PC-9 (cell line): ENCODE measurements at regions of chr5 and their contacts with region 1.

Region 1: GRCh38 chr5:1093361-1093760 is 18.5 kb downstream of the SLC12A7 start:
- DNase-seq: no peak
- H3K4me3 ChIP-seq: no peak overlapping the region
- H3K27ac ChIP-seq: no peak overlapping the region
- H3K4me1 ChIP-seq: no peaks in the 10 kb centered on the region
- H3K27me3 ChIP-seq: no peaks in the 10 kb centered on the region
- CTCF ChIP-seq: no peak

Region 2: DNA sequence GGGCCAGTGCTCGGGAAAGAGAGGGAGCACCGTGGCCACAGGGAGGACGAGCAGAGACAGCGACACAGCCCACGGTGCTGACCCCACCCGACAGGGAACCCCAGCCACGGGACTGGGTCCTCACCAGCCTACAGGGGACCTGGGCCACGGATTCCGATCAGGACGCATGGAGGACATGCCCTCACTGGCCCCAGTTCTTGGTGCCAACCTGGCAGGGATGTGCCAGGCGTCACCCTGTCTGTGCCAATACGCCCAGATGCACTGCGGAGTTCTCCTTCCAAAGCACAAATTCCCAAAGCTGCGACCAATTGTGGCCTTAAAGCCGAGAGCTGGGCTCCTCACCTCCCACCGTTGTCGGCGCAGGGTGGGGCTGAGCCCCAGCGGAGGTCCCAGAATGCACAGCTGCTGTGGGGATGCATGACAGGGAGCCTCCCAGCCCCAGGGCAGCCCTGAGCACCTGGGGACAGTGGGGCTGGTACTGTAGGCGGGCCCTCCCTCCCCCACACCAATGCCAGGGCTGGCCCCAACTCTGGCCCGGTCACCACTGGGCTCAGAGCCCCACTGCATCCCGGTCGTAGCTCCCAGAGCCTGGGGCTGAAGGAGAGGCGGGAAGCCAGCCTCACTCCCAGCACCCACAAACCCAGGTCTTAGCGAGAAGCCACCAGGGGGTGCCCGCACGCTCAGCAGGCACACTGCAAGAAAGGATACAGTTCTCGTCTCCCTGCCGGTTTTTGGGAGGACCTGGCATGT is 40.5 kb before region 1 on chr5:
- CTCF ChIA-PET with region 1: no interaction called
- POLR2A ChIA-PET with region 1: no interaction called
- intact Hi-C with region 1: no loop called
- DNase-seq: no peak
- H3K4me3 ChIP-seq: no peak overlapping the region
- H3K27ac ChIP-seq: no peak overlapping the region
- H3K4me1 ChIP-seq: no peaks in the 10 kb centered on the region
- H3K27me3 ChIP-seq: no peaks in the 10 kb centered on the region
- CTCF ChIP-seq: no peak

Region 3: GRCh38 chr5:1359031-1359645 is 265.8 kb after region 1 on chr5:
- CTCF ChIA-PET with region 1: no interaction called
- POLR2A ChIA-PET with region 1: interaction called, 13 read pairs
- intact Hi-C with region 1: no loop called
- DNase-seq: no peak
- H3K4me3 ChIP-seq: no peak overlapping the region
- H3K27ac ChIP-seq: no peak overlapping the region
- H3K4me1 ChIP-seq: no peaks in the 10 kb centered on the region
- H3K27me3 ChIP-seq: peaks cover 100% of the 10 kb centered on the region
- CTCF ChIP-seq: no peak

Region 4: GRCh38 chr5:1385395-1386273 is 292.3 kb after region 1 on chr5:
- CTCF ChIA-PET with region 1: no interaction called
- POLR2A ChIA-PET with region 1: no interaction called
- intact Hi-C with region 1: no loop called
- DNase-seq: peak in 1 of 2 experiments; percentile 94
- H3K4me3 ChIP-seq: peak overlapping the region; percentile 68
- H3K27ac ChIP-seq: no peak overlapping the region
- H3K4me1 ChIP-seq: 0 out of 2 replicates have a peak, but pooled peaks cover 10% of the 10 kb centered on the region
- H3K27me3 ChIP-seq: peaks cover 94% of the 10 kb centered on the region
- CTCF ChIP-seq: no peak